ENCODE measurements at regions of chr1 and their contacts with region 1.

Region 1: GRCh38 chr1:233627376-233627775 is 13.5 kb downstream of the KCNK1 start:
- DNase-seq: no peak
- CTCF ChIP-seq: no peak

Region 2: DNA sequence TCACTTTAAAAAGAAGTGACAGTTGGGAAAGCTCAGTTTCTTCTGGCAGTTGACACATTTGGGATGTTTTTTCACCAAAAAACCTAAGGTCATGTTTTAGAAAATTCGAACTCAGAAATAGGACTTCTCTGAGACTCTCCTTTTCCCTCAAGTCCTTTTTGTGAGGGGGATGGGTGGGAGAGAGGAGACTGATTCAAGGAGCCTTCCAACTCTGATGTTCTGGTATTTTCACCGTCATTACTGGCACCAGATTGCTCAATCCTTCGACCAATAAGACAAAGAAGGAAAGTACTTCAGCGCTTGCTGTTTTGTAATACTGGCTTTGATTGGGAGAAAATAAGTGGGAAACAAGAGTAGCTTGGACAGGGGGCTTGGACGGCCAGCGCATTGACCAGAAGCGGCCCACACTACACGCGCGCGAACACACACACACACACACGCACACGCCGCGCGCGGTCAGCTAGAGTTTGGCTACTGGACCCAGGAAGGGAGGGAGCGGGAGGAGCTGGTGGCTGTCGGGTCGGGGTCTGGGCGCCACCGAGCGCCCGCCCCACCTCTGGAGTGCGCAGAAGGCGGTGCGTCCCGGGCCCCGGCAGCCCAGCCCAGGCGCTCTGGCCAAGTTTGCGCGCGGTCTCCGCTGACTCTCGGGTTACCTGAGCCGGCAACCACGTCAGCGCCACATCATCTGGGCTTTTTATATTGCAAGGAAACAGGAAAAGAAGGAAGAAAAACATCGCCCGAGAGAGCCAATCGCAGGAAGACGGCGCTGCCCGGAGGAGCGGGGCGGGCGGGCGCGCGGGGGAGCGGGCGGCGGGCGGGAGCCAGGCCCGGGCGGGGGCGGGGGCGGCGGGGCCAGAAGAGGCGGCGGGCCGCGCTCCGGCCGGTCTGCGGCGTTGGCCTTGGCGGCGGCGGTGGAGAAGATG is 13.9 kb before region 1 on chr1 and contains the start of gene KCNK1:
- CTCF ChIA-PET with region 1: interaction called, 12 read pairs
- POLR2A ChIA-PET with region 1: no interaction called
- DNase-seq: peak; percentile 49
- CTCF ChIP-seq: no peak